Panc1 (cell line): ENCODE measurements at regions of chr6 and their contacts with region 1.

Region 1: GRCh38 chr6:85569323-85569722 is 24.3 kb downstream of the SNX14 start:
- DNase-seq: no peak
- ATAC-seq: no peak
- H3K4me3 ChIP-seq: no peak overlapping the region
- H3K27ac ChIP-seq: no peak overlapping the region
- H3K4me1 ChIP-seq: no peaks in the 10 kb centered on the region
- H3K27me3 ChIP-seq: no peaks in the 10 kb centered on the region
- CTCF ChIP-seq: no peak

Region 2: GRCh38 chr6:85390105-85390728 is 179.1 kb before region 1 on chr6:
- CTCF ChIA-PET with region 1: no interaction called
- POLR2A ChIA-PET with region 1: no interaction called
- in situ Hi-C with region 1: no loop called
- intact Hi-C with region 1: no loop called
- DNase-seq: no peak
- ATAC-seq: no peak
- H3K4me3 ChIP-seq: no peak overlapping the region
- H3K27ac ChIP-seq: no peak overlapping the region
- H3K4me1 ChIP-seq: no peaks in the 10 kb centered on the region
- H3K27me3 ChIP-seq: no peaks in the 10 kb centered on the region
- CTCF ChIP-seq: no peak

Region 3: DNA sequence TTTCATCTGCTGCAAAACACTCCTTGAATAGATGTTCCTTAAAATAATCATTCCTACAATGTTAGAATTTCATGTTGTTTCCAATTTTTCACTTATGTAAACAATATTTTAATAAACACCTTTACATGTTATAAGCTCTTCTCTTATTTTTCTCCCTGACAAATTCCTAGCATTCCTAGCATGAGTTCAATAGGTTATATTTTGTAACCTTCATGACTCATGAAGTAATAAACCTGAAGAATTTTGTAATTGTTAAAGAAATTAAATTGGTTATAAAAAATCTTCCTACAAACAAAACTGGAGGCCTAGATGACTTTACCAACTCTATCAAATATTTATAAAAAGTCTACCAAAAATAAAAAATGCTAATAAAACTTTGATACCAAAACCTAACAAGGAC is 53.2 kb before region 1 on chr6:
- CTCF ChIA-PET with region 1: no interaction called
- POLR2A ChIA-PET with region 1: no interaction called
- in situ Hi-C with region 1: no loop called
- intact Hi-C with region 1: no loop called
- DNase-seq: no peak
- ATAC-seq: peak; percentile 53; the same call in 1 of the 2 replicates
- H3K4me3 ChIP-seq: no peak overlapping the region
- H3K27ac ChIP-seq: no peak overlapping the region; the same call in 1 of the 2 replicates
- H3K4me1 ChIP-seq: peaks cover 3% of the 10 kb centered on the region; the same call in 1 of the 2 replicates
- H3K27me3 ChIP-seq: no peaks in the 10 kb centered on the region
- CTCF ChIP-seq: no peak

Region 4: GRCh38 chr6:85593438-85594196 is 24.3 kb after region 1 on chr6 and contains the start of gene SNX14:
- CTCF ChIA-PET with region 1: no interaction called
- POLR2A ChIA-PET with region 1: no interaction called
- in situ Hi-C with region 1: no loop called
- intact Hi-C with region 1: no loop called
- DNase-seq: peak; percentile 76
- ATAC-seq: peak; percentile 96
- H3K4me3 ChIP-seq: peak within 1 kb of the TSS; percentile 90 to 97
- H3K27ac ChIP-seq: peak within 1 kb of the TSS; percentile 97
- H3K4me1 ChIP-seq: peaks cover 39% of the 10 kb centered on the region; the same call in 1 of the 2 replicates
- H3K27me3 ChIP-seq: no peaks in the 10 kb centered on the region
- CTCF ChIP-seq: no peak
- total RNA-seq, gene SNX14: 119 TPM

Region 5: DNA sequence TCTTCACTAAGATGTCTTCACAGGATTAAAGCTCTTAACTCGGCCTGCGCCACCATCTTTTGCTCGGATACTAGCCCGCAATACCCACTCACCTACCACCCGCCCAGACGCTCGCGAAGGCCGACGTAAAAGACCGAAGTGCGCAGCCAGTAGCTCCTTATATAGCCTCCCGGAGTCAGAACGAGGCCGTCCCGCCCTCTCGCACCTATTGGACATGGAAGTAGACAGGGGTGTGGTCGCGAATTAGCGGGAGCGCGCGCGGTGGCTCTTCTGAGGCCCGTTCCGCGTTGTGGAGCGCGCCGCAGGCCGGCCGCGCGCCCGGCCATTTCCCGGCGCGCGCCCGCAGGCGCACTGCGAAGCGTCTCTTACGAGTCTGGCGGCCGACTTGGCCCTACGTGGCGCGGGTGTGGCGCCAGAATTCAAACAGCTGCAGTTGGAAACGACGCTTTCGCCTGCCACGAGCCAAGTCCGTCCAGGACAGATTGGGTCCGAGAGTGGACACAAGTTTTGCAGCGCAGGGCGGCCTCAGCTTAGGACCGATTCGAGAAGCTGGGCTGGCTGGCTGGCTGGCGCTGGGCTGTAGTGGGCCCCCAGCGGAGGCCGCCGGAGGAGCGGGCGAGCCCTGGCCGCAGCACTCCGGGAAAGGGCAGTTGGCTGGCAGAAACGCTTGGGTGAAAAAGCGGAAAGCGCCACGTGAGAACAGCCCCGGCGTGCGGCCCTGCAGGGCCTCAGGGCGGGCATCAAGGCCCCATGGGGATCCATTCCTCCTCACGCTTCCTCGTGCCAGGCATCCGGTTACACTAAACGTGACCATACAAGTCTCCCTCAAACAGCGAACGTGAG is 109.5 kb after region 1 on chr6:
- CTCF ChIA-PET with region 1: no interaction called
- POLR2A ChIA-PET with region 1: interaction called, 18 read pairs
- in situ Hi-C with region 1: no loop called
- intact Hi-C with region 1: no loop called
- DNase-seq: peak; percentile 94
- ATAC-seq: peak; percentile 93
- H3K4me3 ChIP-seq: peak overlapping the region; percentile 86 to 96
- H3K27ac ChIP-seq: peak overlapping the region; percentile 97
- H3K4me1 ChIP-seq: peaks cover 26% of the 10 kb centered on the region
- H3K27me3 ChIP-seq: no peaks in the 10 kb centered on the region
- CTCF ChIP-seq: no peak